ENCODE measurements at regions of chr4 and their contacts with region 1.

Region 1: DNA sequence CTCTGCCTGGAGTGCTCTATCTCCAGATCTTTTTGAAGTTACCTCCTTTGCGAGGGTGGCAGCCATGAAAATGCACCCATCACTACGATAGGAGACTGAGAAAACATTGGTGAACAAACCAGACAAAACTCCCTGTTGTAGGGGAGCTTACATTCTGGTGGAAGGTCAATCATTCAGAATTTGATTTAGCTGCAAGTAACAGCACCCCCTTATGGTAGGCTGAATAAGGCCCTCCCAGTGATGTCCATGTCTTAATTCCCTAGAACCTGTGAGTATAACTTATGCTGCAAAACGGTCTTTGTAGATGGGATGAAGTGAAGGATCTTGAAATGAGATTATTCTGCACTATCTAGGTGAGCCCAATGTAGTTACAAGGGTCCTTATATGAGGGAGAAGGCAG is 5.6 kb upstream of the TEC start:
- DNase-seq: peak; percentile 42
- ATAC-seq: peak; percentile 80
- H3K4me3 ChIP-seq: no peak overlapping the region
- H3K27ac ChIP-seq: no peak overlapping the region
- H3K4me1 ChIP-seq: peaks cover 12% of the 10 kb centered on the region
- H3K27me3 ChIP-seq: no peaks in the 10 kb centered on the region
- CTCF ChIP-seq: peak; percentile 78 to 85 (median 81); a peak in 5 of 6 replicates
- EP300 ChIP-seq: no peak
- POLR2A ChIP-seq: no peak
- RAD21 ChIP-seq: peak; percentile 73

Region 2: DNA sequence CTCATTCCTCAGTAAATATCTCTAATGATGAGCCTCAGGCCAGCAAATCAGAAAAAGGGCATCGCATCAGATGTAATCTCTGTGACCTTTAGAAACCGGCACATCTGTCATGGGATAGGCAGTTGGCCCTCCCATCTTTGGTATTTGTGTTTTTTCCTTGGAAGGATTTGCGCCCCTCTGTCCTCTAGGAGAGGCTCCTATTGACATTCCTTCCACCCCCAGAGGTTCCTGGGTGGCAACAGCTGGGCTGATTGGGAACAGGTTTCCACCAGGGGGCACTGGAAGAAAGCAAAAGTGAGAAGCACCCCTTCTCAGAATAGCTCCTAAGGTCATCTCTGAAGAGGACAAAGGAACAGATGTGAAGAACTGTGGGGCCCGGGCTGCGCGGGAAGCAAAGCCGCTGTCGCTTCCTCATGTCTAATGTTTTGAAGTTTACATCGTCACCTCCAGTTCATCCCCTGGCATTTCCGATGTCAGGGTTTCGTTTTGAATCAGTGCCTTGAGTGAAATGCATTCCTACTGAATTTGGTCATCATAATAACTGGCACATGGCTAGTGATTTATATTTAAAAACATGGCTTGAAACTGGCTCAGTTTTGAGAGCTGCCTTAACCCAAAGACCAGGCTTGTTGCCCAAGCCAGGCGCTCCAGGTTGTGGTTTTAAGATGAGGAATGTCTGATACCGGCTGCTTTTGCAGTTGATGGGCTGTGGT is 147.4 kb before region 1 on chr4:
- CTCF ChIA-PET with region 1: interaction called, 58 read pairs
- POLR2A ChIA-PET with region 1: interaction called, 6 read pairs
- RAD21 ChIA-PET with region 1: interaction called, 39 read pairs
- SMC1A ChIA-PET with region 1: interaction called, 41 read pairs
- in situ Hi-C with region 1: no loop called
- intact Hi-C with region 1: loop called (anchors 1 kb)
- DNase-seq: peak; percentile 81
- ATAC-seq: peak; percentile 92
- H3K4me3 ChIP-seq: no peak overlapping the region
- H3K27ac ChIP-seq: no peak overlapping the region
- H3K4me1 ChIP-seq: peaks cover 15% of the 10 kb centered on the region
- H3K27me3 ChIP-seq: no peaks in the 10 kb centered on the region
- CTCF ChIP-seq: peak; percentile 64 to 71 (median 66)
- EP300 ChIP-seq: no peak
- POLR2A ChIP-seq: 0 out of 2 replicates have a peak, but pooled peaks have one; percentile 32
- RAD21 ChIP-seq: peak; percentile 85

Region 3: GRCh38 chr4:48153791-48154550 is 121.3 kb before region 1 on chr4:
- CTCF ChIA-PET with region 1: interaction called, 14 read pairs
- POLR2A ChIA-PET with region 1: no interaction called
- RAD21 ChIA-PET with region 1: interaction called, 5 read pairs
- SMC1A ChIA-PET with region 1: interaction called, 15 read pairs
- in situ Hi-C with region 1: no loop called
- intact Hi-C with region 1: loop called (anchors 5 kb)
- DNase-seq: peak; percentile 39
- ATAC-seq: peak; percentile 91
- H3K4me3 ChIP-seq: no peak overlapping the region
- H3K27ac ChIP-seq: peak overlapping the region; percentile 63
- H3K4me1 ChIP-seq: peaks cover 6% of the 10 kb centered on the region; the same call in 1 of the 2 replicates
- H3K27me3 ChIP-seq: no peaks in the 10 kb centered on the region
- CTCF ChIP-seq: no peak
- EP300 ChIP-seq: no peak
- POLR2A ChIP-seq: no peak
- RAD21 ChIP-seq: no peak

Region 4: DNA sequence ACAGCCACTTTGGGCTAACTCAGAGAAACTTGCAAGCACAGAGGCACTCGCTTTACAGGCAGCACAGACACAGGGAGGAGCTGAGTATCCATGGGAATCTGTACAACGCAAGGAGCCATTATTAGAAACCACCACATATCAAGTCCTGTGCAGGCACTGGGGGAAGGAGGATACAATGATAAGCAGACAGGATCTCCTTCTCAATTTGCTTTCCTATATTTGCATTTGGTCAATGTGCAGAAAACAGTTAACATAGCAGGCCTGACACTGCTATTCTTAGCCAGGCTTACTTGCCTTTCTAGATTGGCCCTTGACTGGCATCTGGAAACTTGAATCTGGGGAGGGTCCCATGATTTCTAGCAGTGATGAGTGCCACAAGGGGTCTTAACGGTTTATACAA is 71.4 kb before region 1 on chr4:
- CTCF ChIA-PET with region 1: interaction called, 25 read pairs
- POLR2A ChIA-PET with region 1: interaction called, 10 read pairs
- RAD21 ChIA-PET with region 1: interaction called, 21 read pairs
- SMC1A ChIA-PET with region 1: interaction called, 20 read pairs
- in situ Hi-C with region 1: no loop called
- intact Hi-C with region 1: no loop called
- DNase-seq: no peak
- ATAC-seq: peak; percentile 48
- H3K4me3 ChIP-seq: peak overlapping the region; percentile 33; the same call in 1 of the 2 replicates
- H3K27ac ChIP-seq: peak overlapping the region; percentile 84
- H3K4me1 ChIP-seq: peaks cover 73% of the 10 kb centered on the region
- H3K27me3 ChIP-seq: no peaks in the 10 kb centered on the region
- CTCF ChIP-seq: no peak
- EP300 ChIP-seq: peak in 1 of 2 experiments; percentile 19; a peak in 1 of 4 replicates
- POLR2A ChIP-seq: no peak; the same call in 1 of the 2 replicates
- RAD21 ChIP-seq: no peak

Region 5: DNA sequence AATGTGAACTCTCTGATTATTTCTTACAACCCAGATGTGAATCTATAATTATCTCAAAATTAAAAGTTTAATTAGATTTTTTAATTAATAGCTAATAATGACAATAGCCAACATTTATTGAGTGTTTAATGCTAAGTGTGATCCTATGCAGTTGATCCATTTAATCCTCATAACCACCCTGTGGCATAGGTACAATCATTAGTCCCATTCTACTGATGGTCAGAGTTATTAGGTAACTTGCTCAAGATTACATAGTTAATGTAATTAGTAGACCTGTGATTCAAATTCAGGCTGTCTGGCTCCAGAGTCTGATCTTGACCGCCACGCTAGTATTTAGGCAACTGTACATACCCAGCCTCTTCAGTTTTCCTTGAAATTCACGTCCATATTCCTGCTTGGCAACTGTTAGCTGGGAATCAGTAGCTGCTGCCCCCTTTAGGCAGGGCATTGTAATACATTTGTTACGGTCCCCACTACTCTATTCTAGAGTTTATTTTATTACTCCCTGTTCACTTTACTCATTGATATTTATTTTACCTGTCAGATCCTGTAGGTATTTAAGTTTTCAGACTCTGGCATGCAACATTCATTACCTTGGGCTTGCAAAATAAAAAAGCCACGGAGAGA is 15.0 kb after region 1 on chr4:
- CTCF ChIA-PET with region 1: interaction called, 33 read pairs
- POLR2A ChIA-PET with region 1: interaction called, 3 read pairs
- RAD21 ChIA-PET with region 1: interaction called, 5 read pairs
- SMC1A ChIA-PET with region 1: interaction called, 4 read pairs
- in situ Hi-C with region 1: no loop called
- intact Hi-C with region 1: no loop called
- DNase-seq: no peak
- ATAC-seq: peak; percentile 82
- H3K4me3 ChIP-seq: no peak overlapping the region
- H3K27ac ChIP-seq: no peak overlapping the region
- H3K4me1 ChIP-seq: no peaks in the 10 kb centered on the region
- H3K27me3 ChIP-seq: no peaks in the 10 kb centered on the region
- CTCF ChIP-seq: peak; percentile 64 to 76 (median 66)
- EP300 ChIP-seq: no peak
- POLR2A ChIP-seq: no peak
- RAD21 ChIP-seq: peak; percentile 65

Measured in GM12878 (cell line).